ENCODE measurements at regions of chrX and their contacts with region 1.

Region 1: DNA sequence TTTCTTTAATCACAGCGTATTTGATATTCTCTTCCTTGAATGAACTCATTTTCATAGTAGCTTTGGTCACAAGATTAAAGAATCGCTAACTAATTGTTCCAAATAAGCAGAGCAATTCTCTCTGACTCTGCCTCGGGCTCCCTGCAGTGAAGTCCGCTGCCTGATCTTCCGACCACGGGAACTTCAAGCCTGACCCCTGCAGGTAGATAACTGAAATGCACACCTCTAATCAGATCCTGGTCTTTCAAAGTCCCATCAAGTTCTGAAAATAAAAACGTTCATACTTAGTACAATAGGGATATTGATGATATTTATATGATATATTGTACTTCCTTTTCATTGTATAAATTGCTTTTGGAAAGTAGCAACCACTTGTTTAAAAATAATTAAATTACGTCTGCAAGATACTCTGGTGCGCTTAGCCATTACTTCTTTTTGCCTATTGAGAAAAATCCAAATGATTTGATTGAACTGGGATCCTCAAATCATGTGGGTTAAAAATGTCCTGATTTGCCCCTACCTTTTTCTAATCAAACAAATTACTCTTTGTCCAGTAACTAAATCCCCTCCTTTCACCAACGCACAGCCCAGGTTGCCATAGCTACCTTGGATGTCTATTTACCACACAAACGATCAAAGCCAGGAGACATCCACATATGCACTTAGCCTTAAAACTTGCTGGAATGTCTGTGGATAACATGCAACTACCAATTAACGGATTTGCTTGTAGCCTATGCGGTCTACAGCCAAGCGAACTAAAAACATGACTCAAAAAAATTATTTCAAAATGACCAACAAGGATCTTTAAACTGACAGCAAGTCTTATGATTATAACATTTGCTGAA is 4.2 kb downstream of the MID1 start:
- DNase-seq: peak in 1 of 2 experiments; percentile 43
- H3K4me3 ChIP-seq: peak overlapping the region; percentile 63; the same call in 1 of the 2 replicates
- H3K27ac ChIP-seq: peak overlapping the region; percentile 91
- H3K4me1 ChIP-seq: peaks cover 49% of the 10 kb centered on the region
- H3K27me3 ChIP-seq: no peaks in the 10 kb centered on the region
- CTCF ChIP-seq: peak; percentile 68

Region 2: GRCh38 chrX:10329984-10330383 is 286.2 kb before region 1 on chrX:
- CTCF ChIA-PET with region 1: no interaction called
- POLR2A ChIA-PET with region 1: no interaction called
- intact Hi-C with region 1: no loop called
- DNase-seq: no peak
- H3K4me3 ChIP-seq: no peak overlapping the region
- H3K27ac ChIP-seq: no peak overlapping the region
- H3K4me1 ChIP-seq: no peaks in the 10 kb centered on the region
- H3K27me3 ChIP-seq: no peaks in the 10 kb centered on the region
- CTCF ChIP-seq: no peak

Region 3: GRCh38 chrX:10564519-10564918 is 51.6 kb before region 1 on chrX:
- CTCF ChIA-PET with region 1: no interaction called
- POLR2A ChIA-PET with region 1: no interaction called
- intact Hi-C with region 1: no loop called
- DNase-seq: no peak
- H3K4me3 ChIP-seq: no peak overlapping the region
- H3K27ac ChIP-seq: no peak overlapping the region
- H3K4me1 ChIP-seq: no peaks in the 10 kb centered on the region
- H3K27me3 ChIP-seq: no peaks in the 10 kb centered on the region
- CTCF ChIP-seq: no peak

Region 4: DNA sequence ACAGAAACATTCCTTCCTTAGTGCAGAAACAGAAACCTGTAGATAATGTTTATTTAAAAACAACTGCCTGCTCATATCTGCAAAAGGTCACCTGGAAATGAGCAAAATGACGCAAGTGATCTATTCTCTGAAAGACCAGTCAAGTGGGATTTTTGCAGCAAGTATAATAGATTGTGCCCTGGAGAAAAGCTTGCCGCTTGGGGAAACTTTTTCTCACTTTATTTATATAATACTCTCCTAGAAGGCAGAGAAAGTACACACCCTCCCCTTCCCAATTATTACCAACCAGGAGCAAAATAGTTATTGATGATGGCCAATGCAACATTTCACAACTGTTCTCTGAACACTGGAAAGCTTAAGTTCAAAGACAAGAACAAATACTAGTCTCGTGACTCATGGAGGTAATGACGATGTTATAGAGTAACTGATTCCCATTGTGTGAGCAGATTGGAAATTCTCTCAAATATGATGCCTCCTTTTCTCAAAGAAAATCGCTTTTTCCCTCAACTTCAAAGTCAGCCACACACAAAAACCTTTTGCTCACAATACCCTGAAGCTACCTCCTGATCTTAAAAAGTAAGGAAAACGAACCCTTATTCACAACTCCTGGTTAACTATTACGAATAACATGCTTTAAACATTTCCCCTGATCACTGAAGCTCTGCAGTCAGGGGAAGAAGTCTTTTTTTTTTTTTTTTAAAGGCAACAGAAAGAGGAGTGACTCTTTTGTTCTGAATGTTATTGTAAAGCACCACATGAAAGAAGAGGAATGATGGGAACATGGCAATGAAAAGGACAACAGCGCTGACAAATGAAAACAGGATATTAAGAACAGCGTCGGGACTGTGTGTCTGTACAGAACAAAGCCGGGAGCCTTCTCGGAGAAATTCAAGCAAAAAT is 36.8 kb before region 1 on chrX:
- CTCF ChIA-PET with region 1: interaction called, 3 read pairs
- POLR2A ChIA-PET with region 1: interaction called, 4 read pairs
- intact Hi-C with region 1: loop called (anchors 1 kb)
- DNase-seq: peak; percentile 20 to 88
- H3K4me3 ChIP-seq: peak overlapping the region; percentile 52
- H3K27ac ChIP-seq: peak overlapping the region; percentile 99
- H3K4me1 ChIP-seq: peaks cover 33% of the 10 kb centered on the region
- H3K27me3 ChIP-seq: no peaks in the 10 kb centered on the region
- CTCF ChIP-seq: no peak

Region 5: DNA sequence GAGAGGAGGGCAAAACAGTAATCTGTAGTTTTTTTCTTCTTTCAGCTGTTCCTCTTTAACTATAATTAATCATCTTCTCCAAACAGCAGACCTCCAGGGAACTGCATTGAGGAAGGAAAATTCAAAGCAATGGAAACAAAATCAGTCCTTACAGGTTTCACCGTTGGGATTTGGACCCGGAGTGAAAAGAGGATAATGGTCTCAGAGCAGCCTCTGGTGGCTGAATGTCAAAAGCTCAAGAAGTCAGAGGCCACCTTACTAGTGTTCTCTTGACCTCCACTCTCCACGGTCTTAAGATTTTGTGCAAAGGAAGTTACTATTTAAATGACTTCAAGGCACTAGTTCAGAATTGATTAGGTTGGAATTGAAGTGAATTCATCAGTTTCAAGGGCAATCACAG is 20.2 kb after region 1 on chrX:
- CTCF ChIA-PET with region 1: no interaction called
- POLR2A ChIA-PET with region 1: interaction called, 4 read pairs
- intact Hi-C with region 1: loop called (anchors 1 kb)
- DNase-seq: peak; percentile 36 to 47
- H3K4me3 ChIP-seq: no peak overlapping the region
- H3K27ac ChIP-seq: peak overlapping the region; percentile 84; the same call in 1 of the 2 replicates
- H3K4me1 ChIP-seq: peaks cover 47% of the 10 kb centered on the region
- H3K27me3 ChIP-seq: no peaks in the 10 kb centered on the region
- CTCF ChIP-seq: peak; percentile 70

Region 6: DNA sequence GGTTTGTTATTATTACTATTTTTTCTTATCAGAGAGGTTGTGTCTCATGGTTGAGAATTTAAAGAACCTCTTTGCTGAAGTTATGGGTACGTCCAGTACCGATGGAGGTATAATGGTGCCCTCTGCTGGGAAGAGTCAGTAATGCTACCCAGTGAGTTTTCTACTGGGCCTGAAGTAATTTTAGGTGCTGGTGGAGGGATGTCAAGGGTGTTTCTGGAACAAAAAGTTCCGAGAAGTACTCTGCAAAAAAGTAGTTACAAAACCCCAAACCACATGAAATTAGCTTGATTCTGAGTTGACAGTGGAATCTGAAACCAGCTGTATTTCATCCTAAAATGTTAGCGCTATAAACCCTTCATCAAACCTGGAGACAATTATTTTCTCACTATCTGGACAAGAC is 106.7 kb after region 1 on chrX:
- CTCF ChIA-PET with region 1: interaction called, 3 read pairs
- POLR2A ChIA-PET with region 1: no interaction called
- intact Hi-C with region 1: loop called (anchors 5 kb)
- DNase-seq: peak in 1 of 2 experiments; percentile 37
- H3K4me3 ChIP-seq: no peak overlapping the region
- H3K27ac ChIP-seq: no peak overlapping the region
- H3K4me1 ChIP-seq: no peaks in the 10 kb centered on the region
- H3K27me3 ChIP-seq: no peaks in the 10 kb centered on the region
- CTCF ChIP-seq: peak; percentile 82

Measured in PC-9 (cell line).